ENCODE measurements at regions of chr3 and their contacts with region 1.

Region 1: GRCh38 chr3:114827495-114827894 is 319.6 kb downstream of the ZBTB20 start:
- DNase-seq: peak; percentile 18
- H3K4me3 ChIP-seq: no peak overlapping the region
- H3K27ac ChIP-seq: no peak overlapping the region
- H3K4me1 ChIP-seq: no peaks in the 10 kb centered on the region
- H3K27me3 ChIP-seq: no peaks in the 10 kb centered on the region
- CTCF ChIP-seq: peak; percentile 58 to 60

Region 2: DNA sequence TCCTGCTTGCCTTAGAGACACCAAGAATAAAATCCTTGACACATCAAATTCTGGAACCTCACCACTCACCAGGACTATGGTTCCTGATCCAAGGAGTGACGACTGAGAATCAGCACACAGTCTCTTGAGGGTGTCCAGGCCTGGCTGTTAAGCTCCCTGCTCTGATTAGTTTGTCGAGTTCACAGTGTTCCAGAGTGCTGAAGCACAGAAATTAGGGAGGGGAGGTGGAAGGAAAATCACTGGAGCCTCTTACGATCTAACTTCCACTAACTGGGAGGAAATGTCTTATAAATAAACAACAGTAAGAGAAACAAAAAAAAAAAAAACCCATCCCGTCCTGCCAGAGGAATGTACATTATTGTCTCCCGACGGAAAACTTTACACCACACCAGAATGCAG is 203.4 kb before region 1 on chr3:
- CTCF ChIA-PET with region 1: interaction called, 18 read pairs
- dilution Hi-C with region 1: no loop called
- in situ Hi-C with region 1: no loop called
- intact Hi-C with region 1: no loop called
- DNase-seq: no peak
- H3K4me3 ChIP-seq: no peak overlapping the region
- H3K27ac ChIP-seq: no peak overlapping the region
- H3K4me1 ChIP-seq: peaks cover 20% of the 10 kb centered on the region
- H3K27me3 ChIP-seq: no peaks in the 10 kb centered on the region
- CTCF ChIP-seq: no peak

Region 3: GRCh38 chr3:114668099-114668498 is 159.4 kb before region 1 on chr3:
- CTCF ChIA-PET with region 1: no interaction called
- dilution Hi-C with region 1: no loop called
- in situ Hi-C with region 1: no loop called
- intact Hi-C with region 1: no loop called
- DNase-seq: no peak
- H3K4me3 ChIP-seq: no peak overlapping the region
- H3K27ac ChIP-seq: no peak overlapping the region
- H3K4me1 ChIP-seq: no peaks in the 10 kb centered on the region
- H3K27me3 ChIP-seq: no peaks in the 10 kb centered on the region
- CTCF ChIP-seq: no peak

Region 4: DNA sequence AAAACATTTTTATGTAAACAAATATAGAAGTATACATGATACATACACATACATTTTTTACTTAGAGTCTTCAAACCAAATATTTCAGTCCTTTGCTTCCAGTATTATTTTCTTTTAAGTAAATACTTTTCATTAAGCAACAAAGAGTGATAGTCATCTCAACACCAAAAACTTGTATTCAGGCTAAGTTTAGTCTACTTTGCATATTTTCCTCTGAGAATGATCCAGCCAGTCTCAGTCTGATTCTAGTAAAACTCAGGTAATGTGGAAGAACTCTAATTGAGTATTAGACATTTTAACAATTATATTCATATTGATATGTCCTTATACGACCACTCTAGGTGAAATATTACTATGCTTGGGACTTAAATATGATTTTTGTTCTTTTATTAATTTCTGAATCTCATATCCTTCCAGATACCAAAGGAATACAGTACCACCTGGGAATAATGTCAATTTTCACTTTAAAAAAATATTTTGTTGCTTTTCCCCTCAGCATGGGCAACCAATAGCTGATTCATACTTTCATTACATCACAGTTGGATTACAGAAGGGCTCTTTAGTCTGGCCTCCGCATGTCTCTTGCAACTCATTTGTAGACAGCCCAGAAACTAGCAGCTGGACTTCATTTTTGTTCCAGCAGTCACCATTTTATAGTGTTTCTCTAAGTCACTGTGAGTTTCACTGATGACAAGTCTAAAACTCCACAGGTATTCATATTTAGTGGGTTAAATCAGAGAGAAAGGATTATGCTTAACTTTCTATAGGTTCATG is 70.8 kb before region 1 on chr3:
- CTCF ChIA-PET with region 1: interaction called, 12 read pairs
- dilution Hi-C with region 1: no loop called
- in situ Hi-C with region 1: no loop called
- intact Hi-C with region 1: no loop called
- DNase-seq: peak; percentile 90
- H3K4me3 ChIP-seq: no peak overlapping the region
- H3K27ac ChIP-seq: peak overlapping the region; percentile 50
- H3K4me1 ChIP-seq: no peaks in the 10 kb centered on the region
- H3K27me3 ChIP-seq: no peaks in the 10 kb centered on the region
- CTCF ChIP-seq: no peak

Region 5: GRCh38 chr3:115092220-115092791 is 264.8 kb after region 1 on chr3:
- CTCF ChIA-PET with region 1: no interaction called
- dilution Hi-C with region 1: no loop called
- in situ Hi-C with region 1: no loop called
- intact Hi-C with region 1: loop called (anchors 2 kb)
- DNase-seq: peak; percentile 39
- H3K4me3 ChIP-seq: no peak overlapping the region
- H3K27ac ChIP-seq: no peak overlapping the region
- H3K4me1 ChIP-seq: peaks cover under 1% of the 10 kb centered on the region
- H3K27me3 ChIP-seq: no peaks in the 10 kb centered on the region
- CTCF ChIP-seq: peak; percentile 68 to 79

Region 6: GRCh38 chr3:115169808-115170207 is 342.3 kb after region 1 on chr3:
- CTCF ChIA-PET with region 1: no interaction called
- dilution Hi-C with region 1: no loop called
- in situ Hi-C with region 1: loop called in 1 of 2 experiments (anchors 25 kb)
- intact Hi-C with region 1: loop called (anchors 1 kb)
- DNase-seq: no peak
- H3K4me3 ChIP-seq: no peak overlapping the region
- H3K27ac ChIP-seq: no peak overlapping the region
- H3K4me1 ChIP-seq: no peaks in the 10 kb centered on the region
- H3K27me3 ChIP-seq: no peaks in the 10 kb centered on the region
- CTCF ChIP-seq: peak in 1 of 2 donors; percentile 5

Region 7: DNA sequence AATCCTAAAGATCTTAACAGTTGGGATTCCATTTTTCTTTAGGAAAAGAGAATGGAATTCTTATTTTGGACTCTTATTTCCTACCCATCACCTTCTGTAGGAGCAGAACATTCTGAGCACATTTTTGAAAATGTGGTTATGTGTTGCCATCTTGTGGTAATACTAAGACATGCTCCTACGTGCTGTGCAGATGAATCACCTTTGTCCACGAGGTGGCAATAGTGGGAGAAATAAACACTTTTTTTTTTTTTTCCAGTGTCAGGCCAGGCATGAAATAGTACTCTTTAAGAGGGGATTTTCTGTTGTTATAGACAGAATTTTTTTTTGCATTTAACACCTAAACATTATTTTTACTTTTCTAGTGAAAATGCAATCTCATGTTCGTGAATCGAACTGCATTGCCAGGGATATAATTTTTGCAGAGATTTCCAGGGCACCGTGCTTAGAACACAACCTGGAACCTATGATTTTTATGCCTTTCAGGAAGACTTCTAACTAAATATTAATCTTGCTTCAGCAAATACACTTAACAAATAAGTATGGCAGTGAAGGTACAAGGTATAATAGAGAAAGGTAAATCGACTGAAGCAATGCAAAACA is 992.4 kb after region 1 on chr3:
- CTCF ChIA-PET with region 1: no interaction called
- dilution Hi-C with region 1: no loop called
- in situ Hi-C with region 1: no loop called
- intact Hi-C with region 1: loop called (anchors 5 kb)
- DNase-seq: peak; percentile 64
- H3K4me3 ChIP-seq: no peak overlapping the region
- H3K27ac ChIP-seq: no peak overlapping the region
- H3K4me1 ChIP-seq: peaks cover 10% of the 10 kb centered on the region
- H3K27me3 ChIP-seq: no peaks in the 10 kb centered on the region
- CTCF ChIP-seq: peak; percentile 97 to 100

Measured in mammary epithelial cell (primary cell).